SK-N-SH (cell line): ENCODE measurements at regions of chr2 and their contacts with region 1.

Region 1: GRCh38 chr2:20446917-20447436 is at the start of gene RHOB:
- DNase-seq: peak; percentile 100
- H3K4me3 ChIP-seq: peak within 1 kb of the TSS; percentile 82 to 92
- H3K27ac ChIP-seq: peak within 1 kb of the TSS; percentile 82 to 96
- H3K4me1 ChIP-seq: peaks cover 32 to 47% of the 10 kb centered on the region in 2 experiments
- H3K27me3 ChIP-seq: no peaks in the 10 kb centered on the region
- CTCF ChIP-seq: no peak
- EP300 ChIP-seq: peak; percentile 37 to 66; a peak in 3 of 4 replicates
- RAD21 ChIP-seq: peak; percentile 46
- polyA plus RNA-seq, gene RHOB: 43.5 and 50.3 TPM in 2 replicates

Region 2: GRCh38 chr2:20343128-20343527 is 103.8 kb before region 1 on chr2:
- CTCF ChIA-PET with region 1: no interaction called
- POLR2A ChIA-PET with region 1: no interaction called
- DNase-seq: no peak
- H3K4me3 ChIP-seq: no peak overlapping the region
- H3K27ac ChIP-seq: no peak overlapping the region
- H3K4me1 ChIP-seq: peaks cover 0 to 10% of the 10 kb centered on the region in 2 experiments; a peak in 2 of 4 replicates
- H3K27me3 ChIP-seq: no peaks in the 10 kb centered on the region
- CTCF ChIP-seq: no peak
- EP300 ChIP-seq: no peak
- RAD21 ChIP-seq: no peak

Region 3: GRCh38 chr2:20378792-20379519 is 68.0 kb before region 1 on chr2:
- CTCF ChIA-PET with region 1: interaction called, 59 read pairs
- POLR2A ChIA-PET with region 1: interaction called, 35 read pairs
- DNase-seq: peak; percentile 93
- H3K4me3 ChIP-seq: no peak overlapping the region
- H3K27ac ChIP-seq: peak overlapping the region in 1 of 2 experiments; percentile 11; a peak in 1 of 4 replicates
- H3K4me1 ChIP-seq: peaks cover 0 to 16% of the 10 kb centered on the region in 2 experiments; a peak in 1 of 4 replicates
- H3K27me3 ChIP-seq: no peaks in the 10 kb centered on the region; the same call in 1 of the 2 replicates
- CTCF ChIP-seq: peak; percentile 97
- EP300 ChIP-seq: no peak
- RAD21 ChIP-seq: peak; percentile 95

Region 4: DNA sequence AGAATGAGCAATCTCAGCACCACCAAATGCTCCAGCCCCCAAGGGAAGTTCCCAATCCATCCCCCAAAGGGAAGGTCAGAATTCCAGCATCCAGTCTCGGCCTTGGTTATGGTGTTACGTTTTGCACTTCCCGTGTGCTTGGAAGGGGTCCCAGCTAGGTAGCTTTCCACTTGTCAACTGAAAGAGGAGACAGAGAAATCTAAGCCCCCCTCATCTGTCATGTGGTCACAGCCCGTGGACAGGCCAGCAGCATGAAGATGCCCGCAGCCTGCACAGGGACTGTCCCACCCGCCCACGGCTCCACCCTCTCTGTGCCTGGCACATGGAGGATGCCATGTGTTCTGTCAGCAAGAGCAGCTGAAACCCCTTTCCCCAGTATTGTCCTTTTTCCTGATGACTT is 32.0 kb after region 1 on chr2:
- CTCF ChIA-PET with region 1: interaction called, 7 read pairs
- POLR2A ChIA-PET with region 1: interaction called, 10 read pairs
- DNase-seq: no peak
- H3K4me3 ChIP-seq: no peak overlapping the region
- H3K27ac ChIP-seq: no peak overlapping the region
- H3K4me1 ChIP-seq: no peaks in the 10 kb centered on the region; a peak in 1 of 4 replicates
- H3K27me3 ChIP-seq: no peaks in the 10 kb centered on the region
- CTCF ChIP-seq: no peak
- EP300 ChIP-seq: no peak
- RAD21 ChIP-seq: no peak

Region 5: GRCh38 chr2:20539133-20539719 is 92.2 kb after region 1 on chr2:
- CTCF ChIA-PET with region 1: interaction called, 3 read pairs
- POLR2A ChIA-PET with region 1: interaction called, 14 read pairs
- DNase-seq: no peak
- H3K4me3 ChIP-seq: no peak overlapping the region
- H3K27ac ChIP-seq: no peak overlapping the region
- H3K4me1 ChIP-seq: peaks cover 3 to 23% of the 10 kb centered on the region in 2 experiments; a peak in 1 of 4 replicates
- H3K27me3 ChIP-seq: no peaks in the 10 kb centered on the region
- CTCF ChIP-seq: no peak
- EP300 ChIP-seq: no peak
- RAD21 ChIP-seq: no peak

Region 6: DNA sequence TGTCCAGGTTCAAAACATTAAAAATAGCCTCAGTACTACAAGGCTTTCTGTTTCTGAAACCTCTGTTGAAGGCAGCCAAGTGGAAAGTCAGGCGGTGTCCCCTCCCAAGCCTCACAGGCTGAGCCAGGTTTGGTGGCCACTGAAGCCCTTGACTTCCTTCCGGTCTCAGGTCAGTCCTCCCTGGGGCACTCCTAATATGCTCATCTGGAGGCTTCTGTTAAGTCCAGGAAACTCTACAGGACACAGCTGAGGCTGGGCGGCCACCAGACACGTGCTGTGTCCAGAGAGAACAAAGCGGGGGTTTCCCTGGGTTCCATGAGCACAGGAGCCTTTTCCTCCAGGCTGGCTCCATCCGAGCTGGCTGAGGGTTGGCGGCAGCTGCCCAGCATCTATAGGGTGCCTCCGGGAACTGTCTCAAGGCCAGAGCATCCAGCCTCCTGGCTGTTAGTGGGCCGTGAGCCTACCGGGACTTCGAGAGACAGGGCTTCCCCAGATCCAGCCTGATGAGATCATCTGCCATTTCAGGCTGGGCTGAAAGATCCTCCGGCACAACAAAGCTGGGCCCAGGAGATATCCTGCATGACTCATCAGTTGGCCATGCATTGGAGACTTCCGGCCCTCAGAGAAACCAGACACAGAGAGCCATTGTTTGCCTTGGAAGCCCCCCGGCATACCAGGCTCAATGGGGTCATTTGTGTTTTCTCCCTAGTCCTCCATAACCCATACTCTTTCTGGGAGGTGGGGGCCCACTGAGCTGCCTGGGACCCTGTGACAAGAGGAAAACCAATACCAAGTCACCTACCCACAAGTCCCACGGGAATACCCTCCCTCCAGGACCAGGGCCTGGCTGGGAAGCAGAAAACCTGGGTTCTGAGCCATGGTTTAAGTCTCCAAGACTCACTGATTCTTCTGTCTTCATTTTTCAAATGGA is 132.2 kb after region 1 on chr2:
- CTCF ChIA-PET with region 1: interaction called, 4 read pairs
- POLR2A ChIA-PET with region 1: interaction called, 17 read pairs
- DNase-seq: peak; percentile 46
- H3K4me3 ChIP-seq: no peak overlapping the region
- H3K27ac ChIP-seq: peak overlapping the region; percentile 56 to 98; a peak in 3 of 4 replicates
- H3K4me1 ChIP-seq: peaks cover 39 to 45% of the 10 kb centered on the region in 2 experiments; a peak in 3 of 4 replicates
- H3K27me3 ChIP-seq: no peaks in the 10 kb centered on the region
- CTCF ChIP-seq: no peak
- EP300 ChIP-seq: peak; percentile 18 to 94; a peak in 2 of 4 replicates
- RAD21 ChIP-seq: no peak

Region 7: DNA sequence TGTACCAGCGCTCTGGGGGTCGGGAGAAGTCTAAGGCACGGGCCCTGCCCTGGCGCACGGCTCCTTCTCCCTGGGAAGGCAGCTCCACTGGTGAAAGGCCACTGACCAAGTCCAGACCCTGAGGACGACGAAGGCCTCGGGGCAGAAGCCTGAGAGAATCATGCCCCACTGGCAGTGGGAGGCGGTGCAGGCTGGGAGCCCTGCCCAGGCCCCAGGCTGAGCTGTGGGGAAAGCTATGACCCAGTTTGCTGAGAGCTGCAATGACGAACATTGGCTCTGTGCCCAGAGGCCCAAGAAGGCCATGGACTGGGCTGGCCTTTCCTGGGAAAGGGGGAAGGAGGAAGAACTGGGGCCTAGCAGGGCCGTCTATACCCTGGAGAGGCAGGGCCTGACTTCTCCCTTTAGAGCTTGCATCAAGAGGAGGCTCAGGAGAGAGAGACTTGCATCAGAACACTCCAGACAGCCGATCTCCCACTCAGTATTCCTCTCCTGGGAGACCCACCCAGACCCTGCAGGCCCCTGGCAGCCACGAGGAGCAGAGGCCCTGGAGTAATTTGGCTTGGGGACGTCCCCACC is 171.0 kb after region 1 on chr2:
- CTCF ChIA-PET with region 1: interaction called, 22 read pairs
- POLR2A ChIA-PET with region 1: interaction called, 20 read pairs
- DNase-seq: peak; percentile 82
- H3K4me3 ChIP-seq: no peak overlapping the region
- H3K27ac ChIP-seq: peak overlapping the region; percentile 67 to 90
- H3K4me1 ChIP-seq: peaks cover 18 to 42% of the 10 kb centered on the region in 2 experiments; a peak in 3 of 4 replicates
- H3K27me3 ChIP-seq: no peaks in the 10 kb centered on the region
- CTCF ChIP-seq: peak; percentile 56
- EP300 ChIP-seq: no peak; a peak in 1 of 4 replicates
- RAD21 ChIP-seq: peak; percentile 23; the same call in 1 of the 2 replicates

Region 8: DNA sequence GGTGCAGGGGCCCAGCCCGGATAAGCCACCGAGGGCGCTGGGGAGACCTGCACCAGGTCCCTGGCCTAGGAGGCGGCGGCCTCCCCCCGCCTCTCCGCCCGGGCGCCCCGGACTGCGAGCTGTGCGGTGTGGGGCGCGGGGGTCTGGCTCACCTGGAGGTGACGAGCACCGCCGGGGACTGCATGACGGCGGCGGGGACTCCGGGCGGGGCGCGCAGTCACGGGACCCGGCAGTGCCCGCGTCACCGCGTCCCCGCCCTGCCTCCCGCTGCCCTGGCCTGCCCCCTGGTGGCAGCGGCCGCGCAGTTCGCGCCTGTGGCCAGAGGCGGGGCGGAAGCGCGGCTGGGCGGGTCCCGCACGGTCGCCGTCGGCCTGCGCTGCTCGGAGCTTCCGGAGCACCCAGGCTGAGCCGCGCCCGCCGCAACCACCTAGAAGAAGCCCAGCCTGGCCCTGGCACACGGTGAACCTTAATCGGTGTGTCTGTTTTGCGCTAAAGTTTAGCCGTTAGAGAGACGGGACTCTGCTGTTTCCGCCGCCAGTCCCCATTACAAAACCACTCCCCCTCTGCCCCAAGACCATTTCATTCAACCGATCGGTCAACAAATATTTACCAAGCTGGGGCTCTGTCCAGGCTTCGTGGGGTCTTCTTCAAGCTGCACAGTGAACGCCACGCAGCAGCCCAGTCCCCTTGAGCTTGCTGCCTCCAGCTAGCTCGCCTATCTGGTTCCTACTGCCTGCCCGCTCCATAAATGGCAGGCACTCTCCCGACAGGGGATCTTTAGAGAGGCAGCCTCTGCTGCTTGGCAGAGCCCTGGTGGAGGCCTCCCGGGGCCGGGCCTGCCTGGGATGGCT is 204.1 kb after region 1 on chr2 and contains the start of gene HS1BP3:
- CTCF ChIA-PET with region 1: interaction called, 64 read pairs
- POLR2A ChIA-PET with region 1: interaction called, 40 read pairs
- DNase-seq: peak; percentile 100
- H3K4me3 ChIP-seq: peak within 1 kb of the TSS; percentile 76 to 93
- H3K27ac ChIP-seq: peak within 1 kb of the TSS; percentile 48 to 91
- H3K4me1 ChIP-seq: peaks cover 13 to 18% of the 10 kb centered on the region in 2 experiments; a peak in 2 of 4 replicates
- H3K27me3 ChIP-seq: peaks cover 9% of the 10 kb centered on the region; the same call in 1 of the 2 replicates
- CTCF ChIP-seq: peak; percentile 66
- EP300 ChIP-seq: 0 out of 4 replicates have a peak, but pooled peaks of 1 of the 2 experiments have one; percentile 23
- RAD21 ChIP-seq: peak; percentile 59
- polyA plus RNA-seq, gene HS1BP3: 18.7 and 20.1 TPM in 2 replicates